Mammary epithelial cell (primary cell): ENCODE measurements at regions of chr17 and their contacts with region 1.

Region 1: GRCh38 chr17:47941236-47941994 is at the start of gene PNPO:
- DNase-seq: peak; percentile 99
- H3K4me3 ChIP-seq: peak within 1 kb of the TSS; percentile 65 to 78 (median 67)
- H3K27ac ChIP-seq: peak within 1 kb of the TSS; percentile 58
- H3K4me1 ChIP-seq: peaks cover 19% of the 10 kb centered on the region
- H3K27me3 ChIP-seq: no peaks in the 10 kb centered on the region
- CTCF ChIP-seq: peak in 1 of 2 donors; percentile 23
- total RNA-seq, gene PNPO: 63.5 to 89.5 TPM

Region 2: DNA sequence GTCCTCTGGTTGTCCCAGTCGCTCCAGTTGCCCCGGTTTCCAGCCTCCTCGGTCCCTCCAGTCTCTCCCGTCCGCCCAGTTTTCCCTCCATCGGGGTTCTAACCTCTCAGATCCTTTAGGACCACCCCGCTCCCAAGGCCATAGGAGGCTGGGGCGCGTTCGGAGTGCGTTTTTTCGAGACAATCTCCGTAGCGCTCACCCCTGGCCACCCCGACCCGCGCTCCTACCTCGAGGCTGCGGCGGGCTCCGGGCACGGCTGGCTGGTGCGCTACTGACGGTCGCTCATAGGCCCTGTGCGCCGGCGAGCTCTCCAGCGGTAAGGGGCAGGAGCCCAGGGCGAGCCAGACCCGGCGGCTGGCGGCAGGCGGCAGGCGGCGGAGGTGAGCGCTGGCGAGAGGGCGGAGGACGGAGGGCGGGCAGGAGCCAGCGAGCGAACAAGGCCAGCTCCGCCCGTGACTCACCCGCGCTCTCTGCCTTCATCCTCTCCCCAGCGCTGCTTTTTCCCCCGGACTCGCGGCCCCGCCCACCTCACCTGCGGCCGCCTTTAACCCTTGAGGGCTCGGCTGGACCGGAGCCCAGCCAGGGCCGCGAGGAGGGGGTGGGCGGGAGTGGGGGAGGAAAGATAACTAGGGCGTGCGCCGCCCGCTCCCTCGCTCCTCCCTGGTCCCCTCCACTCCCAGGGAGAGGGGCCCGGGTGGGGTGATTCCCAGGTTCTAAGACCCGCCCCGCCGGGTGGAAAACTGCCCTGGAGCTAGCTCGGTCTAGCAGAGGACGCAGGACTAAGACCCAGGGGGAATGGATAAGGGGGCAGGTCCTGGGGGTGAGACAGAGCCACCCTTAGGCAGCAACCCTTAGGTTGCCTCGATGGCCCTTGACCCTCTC is 90.5 kb before region 1 on chr17 and contains the start of gene SP6:
- CTCF ChIA-PET with region 1: no interaction called
- dilution Hi-C with region 1: loop called (anchors 5 kb)
- in situ Hi-C with region 1: loop called in 1 of 2 experiments (anchors 10 kb)
- intact Hi-C with region 1: no loop called
- DNase-seq: peak; percentile 92
- H3K4me3 ChIP-seq: peak within 1 kb of the TSS; percentile 66 to 89 (median 70)
- H3K27ac ChIP-seq: peak within 1 kb of the TSS; percentile 64
- H3K4me1 ChIP-seq: peaks cover 34% of the 10 kb centered on the region
- H3K27me3 ChIP-seq: peaks cover 3% of the 10 kb centered on the region
- CTCF ChIP-seq: peak in 1 of 2 donors; percentile 45
- total RNA-seq, gene SP6: 4.2 to 15.1 TPM

Region 3: DNA sequence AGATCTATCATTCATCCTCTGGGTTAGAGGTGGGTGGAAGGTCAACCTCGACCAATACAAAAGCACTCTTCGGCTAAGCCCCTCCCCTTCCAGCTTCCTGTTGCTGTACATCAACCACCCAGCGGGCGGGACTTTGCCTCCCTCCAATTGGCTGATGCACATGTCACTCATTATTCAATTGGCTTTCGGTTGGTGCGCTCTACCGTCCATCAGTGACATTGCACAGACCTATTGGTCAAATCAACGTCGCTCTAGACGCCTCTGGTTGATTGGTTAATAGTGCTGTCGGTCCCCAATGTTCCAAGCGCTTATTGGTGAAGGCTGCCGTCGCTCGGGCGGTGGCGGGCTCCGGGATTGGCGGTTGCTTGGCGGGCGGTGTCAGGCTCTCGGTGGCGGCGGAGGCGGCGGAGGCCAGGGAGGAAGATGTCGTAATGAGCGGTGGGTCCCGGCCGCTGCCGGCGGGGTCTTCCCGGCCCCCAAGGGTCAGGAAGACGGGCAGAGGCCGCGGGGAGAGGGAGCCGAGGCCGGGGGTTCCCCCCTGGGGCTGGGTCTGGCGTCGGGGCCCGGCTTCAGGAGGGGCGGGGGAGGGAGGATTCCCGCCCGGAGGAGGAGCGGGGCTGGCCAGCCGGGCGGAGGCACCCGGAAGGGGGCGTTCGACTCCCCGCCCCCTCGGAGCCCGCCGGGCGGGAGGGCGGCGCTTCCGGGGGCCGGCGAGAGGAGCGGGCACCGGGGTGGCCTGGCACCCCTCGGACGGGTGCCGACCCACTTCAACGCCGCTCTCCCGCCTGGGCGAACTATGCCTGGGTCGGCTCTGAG is 45.4 kb before region 1 on chr17 and contains the start of gene SP2:
- CTCF ChIA-PET with region 1: interaction called, 5 read pairs
- dilution Hi-C with region 1: no loop called
- in situ Hi-C with region 1: no loop called
- intact Hi-C with region 1: loop called (anchors 1 kb)
- DNase-seq: peak; percentile 100
- H3K4me3 ChIP-seq: peak within 1 kb of the TSS; percentile 86 to 97 (median 91)
- H3K27ac ChIP-seq: peak within 1 kb of the TSS; percentile 85
- H3K4me1 ChIP-seq: peaks cover 29% of the 10 kb centered on the region
- H3K27me3 ChIP-seq: no peaks in the 10 kb centered on the region
- CTCF ChIP-seq: no peak
- total RNA-seq, gene SP2: 1.5 to 14.9 TPM

Region 4: GRCh38 chr17:47907932-47908562 is 33.4 kb before region 1 on chr17:
- CTCF ChIA-PET with region 1: interaction called, 13 read pairs
- dilution Hi-C with region 1: no loop called
- in situ Hi-C with region 1: no loop called
- intact Hi-C with region 1: no loop called
- DNase-seq: peak; percentile 11
- H3K4me3 ChIP-seq: peak overlapping the region; percentile 4 to 12 (median 6)
- H3K27ac ChIP-seq: no peak overlapping the region
- H3K4me1 ChIP-seq: peaks cover 22% of the 10 kb centered on the region
- H3K27me3 ChIP-seq: no peaks in the 10 kb centered on the region
- CTCF ChIP-seq: no peak

Region 5: DNA sequence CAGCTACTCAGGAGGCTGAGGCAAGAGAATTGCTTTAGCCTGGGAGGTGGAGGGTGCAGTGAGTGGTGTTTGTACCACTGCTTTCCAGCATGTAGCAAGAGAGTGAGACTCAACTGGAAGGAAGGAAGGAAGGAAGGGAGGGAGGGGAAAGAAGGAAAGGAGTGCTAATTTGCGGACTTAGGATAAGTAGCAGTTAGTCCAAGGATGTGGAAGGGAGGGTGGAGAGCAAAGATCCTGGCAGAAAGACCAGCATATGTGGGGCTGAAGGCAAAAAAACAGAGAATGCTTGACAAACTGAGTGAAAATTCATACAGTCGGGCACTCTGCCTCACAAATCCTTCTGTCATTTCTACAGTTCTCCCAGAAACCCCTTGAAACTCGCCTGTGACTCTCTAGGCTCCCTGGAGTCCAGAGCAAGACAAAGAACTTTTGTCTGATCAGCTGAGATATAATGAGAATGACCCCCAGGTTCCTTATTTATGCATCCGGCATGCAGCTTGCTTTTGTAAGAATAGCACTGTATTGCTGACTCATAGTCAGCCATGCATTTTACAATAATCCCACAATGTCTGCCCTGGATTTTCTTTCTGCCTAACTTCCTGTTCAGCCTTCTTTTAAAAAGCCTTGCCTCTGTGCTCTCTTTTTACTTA is 61.0 kb after region 1 on chr17:
- CTCF ChIA-PET with region 1: interaction called, 13 read pairs
- dilution Hi-C with region 1: no loop called
- in situ Hi-C with region 1: no loop called
- intact Hi-C with region 1: no loop called
- DNase-seq: peak; percentile 80
- H3K4me3 ChIP-seq: no peak overlapping the region
- H3K27ac ChIP-seq: peak overlapping the region; percentile 87
- H3K4me1 ChIP-seq: peaks cover 24% of the 10 kb centered on the region
- H3K27me3 ChIP-seq: no peaks in the 10 kb centered on the region
- CTCF ChIP-seq: no peak